ENCODE measurements at regions of chr1 and their contacts with region 1.

Region 1: DNA sequence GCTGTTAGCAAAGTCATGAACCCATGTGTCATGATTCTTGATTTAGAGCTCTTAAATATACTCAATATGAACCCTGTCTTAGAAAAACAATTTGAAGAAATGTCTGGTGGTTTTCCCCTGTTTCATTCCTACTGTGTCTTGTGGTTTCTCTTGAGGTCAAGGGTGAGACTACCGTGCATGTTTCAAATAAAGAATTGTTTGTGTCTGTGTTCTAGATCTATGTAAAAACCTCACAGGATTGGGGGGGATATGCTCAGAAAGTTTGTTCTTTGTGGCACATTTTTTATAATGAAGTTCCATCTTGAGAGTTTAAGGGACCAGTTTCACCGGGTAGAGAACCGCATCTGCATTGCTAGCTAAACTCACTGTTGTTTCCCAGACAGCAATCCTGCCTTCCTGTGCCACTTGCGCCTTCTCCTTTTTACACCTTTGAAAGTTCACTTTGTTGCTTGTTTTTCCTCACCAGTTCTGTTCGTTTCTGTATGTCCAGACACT is 30.9 kb upstream of the CACYBP start:
- DNase-seq: peak; percentile 77 to 82 (median 78)
- H3K4me3 ChIP-seq: peak overlapping the region in 1 of 2 donors; percentile 29
- H3K4me3 Mint-ChIP-seq: peak overlapping the region; percentile 65 to 84 (median 76)
- H3K27ac ChIP-seq: peak overlapping the region; percentile 59
- H3K27ac Mint-ChIP-seq: peak overlapping the region; percentile 93 to 99 (median 94)
- H3K4me1 ChIP-seq: peaks cover 84% of the 10 kb centered on the region
- H3K4me1 Mint-ChIP-seq: peaks cover 57 to 73% (median 67%) of the 10 kb centered on the region in 4 donors
- H3K27me3 ChIP-seq: no peaks in the 10 kb centered on the region
- H3K27me3 Mint-ChIP-seq: no peaks in the 10 kb centered on the region

Region 2: GRCh38 chr1:174159252-174160108 is 809.3 kb before region 1 on chr1 and contains the start of gene RABGAP1L:
- CTCF ChIA-PET with region 1: no interaction called
- POLR2A ChIA-PET with region 1: no interaction called
- intact Hi-C with region 1: loop called (anchors 10 kb)
- DNase-seq: peak; percentile 91 to 96 (median 95)
- H3K4me3 ChIP-seq: peak within 1 kb of the TSS; percentile 88 to 95
- H3K4me3 Mint-ChIP-seq: peak within 1 kb of the TSS; percentile 94 to 99 (median 97)
- H3K27ac ChIP-seq: peak within 1 kb of the TSS; percentile 92
- H3K27ac Mint-ChIP-seq: peak within 1 kb of the TSS; percentile 92 to 99 (median 98)
- H3K4me1 ChIP-seq: peaks cover 56% of the 10 kb centered on the region
- H3K4me1 Mint-ChIP-seq: peaks cover 40 to 67% (median 52%) of the 10 kb centered on the region in 4 donors
- H3K27me3 ChIP-seq: no peaks in the 10 kb centered on the region
- H3K27me3 Mint-ChIP-seq: no peaks in the 10 kb centered on the region
- total RNA-seq, gene RABGAP1L: 113 to 114 TPM

Region 3: DNA sequence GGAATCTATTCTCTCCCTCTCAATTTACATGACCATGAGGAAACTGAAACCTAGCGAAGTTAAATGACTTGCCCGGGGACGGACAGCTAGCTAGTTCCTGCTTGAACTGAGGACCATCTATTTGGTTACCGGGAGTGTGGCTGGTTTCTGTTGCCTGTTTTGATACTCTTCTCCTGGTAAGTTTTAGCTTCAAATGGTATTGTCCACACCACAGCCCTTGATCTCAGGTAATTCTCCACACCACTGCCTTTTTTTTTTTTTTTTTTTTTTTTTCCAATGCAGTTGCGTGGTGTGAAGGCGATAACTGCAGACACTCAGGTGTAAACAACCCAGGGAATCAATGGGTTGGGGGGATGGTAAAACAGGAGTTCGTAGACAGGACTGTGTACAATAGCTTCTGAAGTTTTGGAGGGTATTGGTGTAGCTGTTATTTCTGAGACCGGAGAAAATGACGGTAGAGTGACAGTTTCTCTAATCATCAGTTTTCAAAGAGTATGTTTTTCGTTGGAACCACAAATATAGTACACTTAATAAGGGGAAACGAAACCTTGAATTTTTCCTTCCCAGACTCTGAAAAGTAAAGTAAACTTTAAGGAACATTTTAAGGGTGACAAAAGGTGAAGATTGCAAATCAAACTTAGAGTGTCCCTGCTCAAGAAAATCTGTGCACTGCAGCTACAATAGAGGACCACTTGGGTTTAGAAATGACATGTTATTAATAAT is 94.3 kb before region 1 on chr1:
- CTCF ChIA-PET with region 1: interaction called, 3 read pairs
- POLR2A ChIA-PET with region 1: interaction called, 17 read pairs
- intact Hi-C with region 1: loop called (anchors 5 kb)
- DNase-seq: no peak
- H3K4me3 ChIP-seq: no peak overlapping the region
- H3K4me3 Mint-ChIP-seq: peak overlapping the region; percentile 78 to 89 (median 84)
- H3K27ac ChIP-seq: no peak overlapping the region
- H3K27ac Mint-ChIP-seq: peak overlapping the region; percentile 62 to 88 (median 77)
- H3K4me1 ChIP-seq: peaks cover 19% of the 10 kb centered on the region
- H3K4me1 Mint-ChIP-seq: peaks cover 12 to 38% (median 18%) of the 10 kb centered on the region in 4 donors
- H3K27me3 ChIP-seq: no peaks in the 10 kb centered on the region
- H3K27me3 Mint-ChIP-seq: no peaks in the 10 kb centered on the region

Region 4: GRCh38 chr1:174938281-174939007 is 30.4 kb before region 1 on chr1:
- CTCF ChIA-PET with region 1: interaction called, 3 read pairs
- POLR2A ChIA-PET with region 1: interaction called, 10 read pairs
- intact Hi-C with region 1: no loop called
- DNase-seq: no peak
- H3K4me3 ChIP-seq: no peak overlapping the region
- H3K4me3 Mint-ChIP-seq: peak overlapping the region in 6 of 8 donors; percentile 41 to 79 (median 61)
- H3K27ac ChIP-seq: no peak overlapping the region
- H3K27ac Mint-ChIP-seq: peak overlapping the region in 6 of 7 donors; percentile 18 to 61 (median 52)
- H3K4me1 ChIP-seq: peaks cover 12% of the 10 kb centered on the region
- H3K4me1 Mint-ChIP-seq: peaks cover 17 to 32% (median 20%) of the 10 kb centered on the region in 4 donors
- H3K27me3 ChIP-seq: no peaks in the 10 kb centered on the region
- H3K27me3 Mint-ChIP-seq: no peaks in the 10 kb centered on the region

Region 5: GRCh38 chr1:174982971-174983689 is 14.3 kb after region 1 on chr1:
- CTCF ChIA-PET with region 1: interaction called, 122 read pairs
- POLR2A ChIA-PET with region 1: interaction called, 243 read pairs
- intact Hi-C with region 1: loop called (anchors 1 kb)
- DNase-seq: peak; percentile 59 to 70 (median 62)
- H3K4me3 ChIP-seq: no peak overlapping the region
- H3K4me3 Mint-ChIP-seq: no peak overlapping the region
- H3K27ac ChIP-seq: no peak overlapping the region
- H3K27ac Mint-ChIP-seq: peak overlapping the region in 5 of 7 donors; percentile 44 to 75 (median 59)
- H3K4me1 ChIP-seq: peaks cover 4% of the 10 kb centered on the region
- H3K4me1 Mint-ChIP-seq: peaks cover 13 to 28% (median 21%) of the 10 kb centered on the region in 4 donors
- H3K27me3 ChIP-seq: no peaks in the 10 kb centered on the region
- H3K27me3 Mint-ChIP-seq: no peaks in the 10 kb centered on the region

Region 6: GRCh38 chr1:175023043-175023921 is 54.5 kb after region 1 on chr1 and contains the start of gene MRPS14:
- CTCF ChIA-PET with region 1: no interaction called
- POLR2A ChIA-PET with region 1: interaction called, 32 read pairs
- intact Hi-C with region 1: loop called (anchors 2 kb)
- DNase-seq: peak; percentile 95 to 98 (median 97)
- H3K4me3 ChIP-seq: peak within 1 kb of the TSS; percentile 79 to 97
- H3K4me3 Mint-ChIP-seq: peak within 1 kb of the TSS; percentile 90 to 98 (median 93)
- H3K27ac ChIP-seq: peak within 1 kb of the TSS; percentile 94
- H3K27ac Mint-ChIP-seq: peak within 1 kb of the TSS; percentile 86 to 97 (median 97)
- H3K4me1 ChIP-seq: peaks cover 25% of the 10 kb centered on the region
- H3K4me1 Mint-ChIP-seq: peaks cover 24 to 43% (median 28%) of the 10 kb centered on the region in 4 donors
- H3K27me3 ChIP-seq: no peaks in the 10 kb centered on the region
- H3K27me3 Mint-ChIP-seq: no peaks in the 10 kb centered on the region
- total RNA-seq, gene MRPS14: 39.3 to 40.6 TPM